CD8-positive, alpha-beta T cell (primary cell): ENCODE measurements at regions of chr9 and their contacts with region 1.

Region 1: DNA sequence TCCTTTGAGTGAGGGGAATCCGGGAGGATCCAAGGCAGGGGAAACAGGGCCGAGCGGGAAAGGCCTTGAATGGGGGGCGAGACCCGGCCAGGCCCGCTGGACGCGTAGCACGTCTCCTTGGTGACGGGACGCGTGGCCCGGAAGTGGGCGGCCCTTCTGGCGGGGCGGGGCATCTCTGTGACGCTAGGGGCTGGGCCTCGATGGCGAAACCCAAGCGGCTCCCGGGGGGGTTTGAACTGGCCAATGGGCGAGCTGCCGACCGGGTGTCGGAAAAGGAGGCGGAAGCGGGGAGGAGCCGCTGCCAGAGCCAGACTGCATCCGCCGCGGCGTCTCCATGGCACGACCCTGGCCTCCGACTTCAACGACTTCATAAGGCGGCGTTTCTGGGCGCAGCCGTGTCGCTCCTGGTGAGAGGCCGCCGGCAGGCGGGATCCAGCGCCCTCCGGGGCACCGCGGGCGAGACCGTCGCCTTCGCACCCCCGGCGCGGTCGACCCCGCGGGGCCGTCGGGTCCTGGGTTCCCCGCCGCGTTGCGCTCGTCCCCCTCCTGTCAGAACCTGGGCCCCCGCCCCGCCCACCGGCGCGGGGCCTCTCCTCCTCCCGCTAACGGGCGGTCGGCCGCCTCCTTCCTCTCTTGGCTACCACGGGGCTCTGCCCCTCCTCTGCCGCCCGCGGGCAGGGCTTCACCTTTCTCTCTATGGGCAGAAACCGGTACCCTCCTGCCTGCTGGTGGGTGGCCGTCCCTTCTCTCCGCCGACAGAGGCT is at the start of gene ODF2:
- DNase-seq: peak; percentile 96 to 99 (median 99)
- ATAC-seq: peak; percentile 90
- H3K4me3 ChIP-seq: peak within 1 kb of the TSS; percentile 74 to 87
- H3K4me3 Mint-ChIP-seq: peak within 1 kb of the TSS; percentile 89
- H3K27ac ChIP-seq: peak within 1 kb of the TSS; percentile 87
- H3K27ac Mint-ChIP-seq: peak within 1 kb of the TSS; percentile 91
- H3K4me1 ChIP-seq: peaks cover 8% of the 10 kb centered on the region
- H3K4me1 Mint-ChIP-seq: peaks cover 22% of the 10 kb centered on the region
- H3K27me3 ChIP-seq: no peaks in the 10 kb centered on the region
- H3K27me3 Mint-ChIP-seq: no peaks in the 10 kb centered on the region
- CTCF ChIP-seq: no peak
- total RNA-seq, gene ODF2: 15.0 to 17.2 TPM

Region 2: DNA sequence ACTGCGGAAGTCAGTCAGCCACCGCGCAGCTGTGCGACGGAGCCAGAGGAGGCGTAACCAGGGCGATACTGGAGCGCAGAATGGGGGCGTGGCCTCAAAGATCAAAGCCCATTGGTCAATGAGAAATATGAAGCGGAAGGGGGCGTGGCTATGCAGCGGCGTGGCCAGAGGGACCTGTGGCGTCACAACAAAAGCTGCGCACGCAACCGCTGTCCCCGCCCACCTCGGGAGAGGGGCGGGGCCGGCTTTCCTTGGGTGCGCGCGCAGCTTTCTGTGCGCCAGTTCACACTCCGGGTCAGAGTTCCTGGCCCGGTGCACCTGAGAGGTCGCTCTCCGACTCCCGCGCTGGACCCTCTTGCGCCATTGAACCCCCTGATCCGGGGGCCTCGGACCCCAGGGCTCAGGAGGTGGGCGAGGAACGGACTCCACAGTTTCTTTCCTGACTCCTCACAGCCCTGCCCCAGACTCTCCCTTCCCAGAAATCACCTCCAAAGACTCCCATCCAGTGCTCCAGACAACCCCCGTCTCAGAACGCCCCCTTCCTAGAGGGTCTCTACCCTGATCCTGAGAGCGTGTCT is 179.9 kb before region 1 on chr9 and contains the starts of genes GOLGA2 and SWI5:
- CTCF ChIA-PET with region 1: no interaction called
- POLR2A ChIA-PET with region 1: no interaction called
- intact Hi-C with region 1: loop called in 1 of 2 experiments (anchors 1 kb)
- DNase-seq: peak; percentile 99 to 100 (median 100)
- ATAC-seq: peak; percentile 93
- H3K4me3 ChIP-seq: peak within 1 kb of the TSS; percentile 75 to 81
- H3K4me3 Mint-ChIP-seq: peak within 1 kb of the TSS; percentile 96
- H3K27ac ChIP-seq: peak within 1 kb of the TSS; percentile 76 to 81
- H3K27ac Mint-ChIP-seq: peak within 1 kb of the TSS; percentile 96
- H3K4me1 ChIP-seq: peaks cover 22% of the 10 kb centered on the region
- H3K4me1 Mint-ChIP-seq: peaks cover 32% of the 10 kb centered on the region
- H3K27me3 ChIP-seq: no peaks in the 10 kb centered on the region
- H3K27me3 Mint-ChIP-seq: no peaks in the 10 kb centered on the region
- CTCF ChIP-seq: no peak
- total RNA-seq, gene GOLGA2: 49.9 to 59.0 TPM
- total RNA-seq, gene SWI5: 3.5 to 4.3 TPM

Region 3: DNA sequence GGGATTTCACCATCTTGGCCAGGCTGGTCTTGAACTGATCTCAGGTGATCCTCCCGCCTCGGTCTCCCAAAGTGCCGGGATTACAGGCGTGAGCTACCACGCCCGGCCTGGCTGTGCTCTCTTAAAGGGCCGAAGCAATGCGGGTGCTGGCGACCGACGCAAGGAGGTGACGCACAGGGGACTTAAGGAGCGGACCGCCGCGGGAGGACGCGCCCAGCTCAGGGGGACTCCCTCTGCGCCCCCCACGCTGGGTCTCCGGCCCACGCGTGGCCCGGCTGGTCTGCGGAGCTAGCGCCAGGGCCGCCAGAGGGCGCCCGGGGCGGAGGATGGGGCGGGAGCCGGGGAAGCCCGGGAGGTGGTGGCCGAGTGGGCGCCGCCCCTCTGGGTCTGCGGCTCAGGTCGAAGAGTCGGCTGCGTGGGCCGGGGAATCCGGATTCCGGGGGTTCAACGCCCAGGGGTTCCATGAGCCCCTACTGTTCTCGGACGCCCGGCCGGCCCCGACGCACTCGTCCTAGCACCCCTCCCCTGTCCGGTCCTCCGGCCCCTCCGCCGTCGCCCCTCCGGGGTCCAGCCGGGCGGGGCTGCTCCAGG is 35.9 kb before region 1 on chr9:
- CTCF ChIA-PET with region 1: no interaction called
- POLR2A ChIA-PET with region 1: no interaction called
- intact Hi-C with region 1: loop called in 1 of 2 experiments (anchors 1 kb)
- DNase-seq: peak; percentile 24 to 84 (median 66)
- ATAC-seq: peak; percentile 76
- H3K4me3 ChIP-seq: peak overlapping the region; percentile 55 to 61
- H3K4me3 Mint-ChIP-seq: peak overlapping the region; percentile 78
- H3K27ac ChIP-seq: no peak overlapping the region
- H3K27ac Mint-ChIP-seq: no peak overlapping the region
- H3K4me1 ChIP-seq: peaks cover 14% of the 10 kb centered on the region
- H3K4me1 Mint-ChIP-seq: peaks cover 11% of the 10 kb centered on the region
- H3K27me3 ChIP-seq: peaks cover 0 to 10% of the 10 kb centered on the region in 2 experiments
- H3K27me3 Mint-ChIP-seq: peaks cover 23% of the 10 kb centered on the region
- CTCF ChIP-seq: peak; percentile 75

Region 4: DNA sequence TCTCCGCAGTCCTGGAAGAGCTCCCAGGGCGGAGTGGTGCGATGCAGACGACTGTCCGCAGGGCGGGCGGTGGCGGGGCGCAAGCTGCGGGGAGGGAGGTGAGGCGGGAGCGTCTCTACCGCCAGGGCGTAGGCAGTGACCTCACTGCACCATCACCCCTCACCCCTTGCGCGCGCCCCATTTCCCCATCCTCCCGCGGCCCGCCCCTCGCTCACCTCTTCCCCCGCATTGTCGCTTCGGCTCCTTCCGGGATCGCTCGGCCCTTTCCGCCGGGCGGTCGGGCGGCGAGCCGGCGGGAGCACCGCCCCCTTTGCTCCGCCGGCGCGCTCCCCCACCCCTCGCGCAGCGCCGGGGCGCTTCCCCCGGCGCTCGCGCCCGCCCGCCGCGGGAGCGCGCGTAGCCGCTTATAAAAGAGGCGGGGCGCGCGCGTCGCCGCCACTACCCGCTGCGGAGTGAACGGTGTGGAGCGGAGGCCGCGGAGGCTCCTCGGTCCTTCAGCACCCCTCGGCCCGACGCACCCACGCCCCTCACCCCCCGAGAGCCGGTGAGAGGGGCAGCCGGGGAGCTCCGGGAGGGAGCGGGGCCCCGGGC is 96.2 kb after region 1 on chr9 and contains the start of gene SPTAN1:
- CTCF ChIA-PET with region 1: no interaction called
- POLR2A ChIA-PET with region 1: interaction called, 6 read pairs
- intact Hi-C with region 1: loop called (anchors 1 kb)
- DNase-seq: peak; percentile 91 to 97 (median 95)
- ATAC-seq: peak; percentile 85
- H3K4me3 ChIP-seq: peak within 1 kb of the TSS; percentile 85 to 95
- H3K4me3 Mint-ChIP-seq: no peak within 1 kb of the TSS
- H3K27ac ChIP-seq: peak within 1 kb of the TSS; percentile 92 to 93
- H3K27ac Mint-ChIP-seq: peak within 1 kb of the TSS; percentile 96
- H3K4me1 ChIP-seq: peaks cover 54% of the 10 kb centered on the region
- H3K4me1 Mint-ChIP-seq: peaks cover 24% of the 10 kb centered on the region
- H3K27me3 ChIP-seq: no peaks in the 10 kb centered on the region
- H3K27me3 Mint-ChIP-seq: no peaks in the 10 kb centered on the region
- CTCF ChIP-seq: no peak
- total RNA-seq, gene SPTAN1: 299 to 332 TPM

Region 5: GRCh38 chr9:128771745-128772519 is 315.9 kb after region 1 on chr9 and contains the start of gene ZER1:
- CTCF ChIA-PET with region 1: no interaction called
- POLR2A ChIA-PET with region 1: no interaction called
- intact Hi-C with region 1: loop called in 1 of 2 experiments (anchors 1 kb)
- DNase-seq: peak; percentile 86 to 98 (median 95)
- ATAC-seq: peak; percentile 85
- H3K4me3 ChIP-seq: peak within 1 kb of the TSS; percentile 82 to 98
- H3K4me3 Mint-ChIP-seq: peak within 1 kb of the TSS; percentile 96
- H3K27ac ChIP-seq: peak within 1 kb of the TSS; percentile 80 to 98
- H3K27ac Mint-ChIP-seq: peak within 1 kb of the TSS; percentile 99
- H3K4me1 ChIP-seq: peaks cover 22% of the 10 kb centered on the region
- H3K4me1 Mint-ChIP-seq: peaks cover 33% of the 10 kb centered on the region
- H3K27me3 ChIP-seq: no peaks in the 10 kb centered on the region
- H3K27me3 Mint-ChIP-seq: no peaks in the 10 kb centered on the region
- CTCF ChIP-seq: no peak
- total RNA-seq, gene ZER1: 35.9 to 45.2 TPM

Region 6: GRCh38 chr9:129237195-129237611 is 781.2 kb after region 1 on chr9:
- CTCF ChIA-PET with region 1: no interaction called
- POLR2A ChIA-PET with region 1: no interaction called
- intact Hi-C with region 1: loop called in 1 of 2 experiments (anchors 5 kb)
- DNase-seq: peak in 8 of 9 experiments; percentile 36 to 79 (median 66)
- ATAC-seq: peak; percentile 70
- H3K4me3 ChIP-seq: peak overlapping the region; percentile 51 to 66
- H3K4me3 Mint-ChIP-seq: peak overlapping the region; percentile 88
- H3K27ac ChIP-seq: peak overlapping the region; percentile 56 to 62
- H3K27ac Mint-ChIP-seq: peak overlapping the region; percentile 94
- H3K4me1 ChIP-seq: peaks cover 50% of the 10 kb centered on the region
- H3K4me1 Mint-ChIP-seq: peaks cover 70% of the 10 kb centered on the region
- H3K27me3 ChIP-seq: no peaks in the 10 kb centered on the region
- H3K27me3 Mint-ChIP-seq: no peaks in the 10 kb centered on the region
- CTCF ChIP-seq: no peak